Activated CD4-positive, alpha-beta T cell treated with anti-CD3 and anti-CD28 coated beads for 36 hours (primary cell): ENCODE measurements at regions of chr11 and their contacts with region 1.

Region 1: GRCh38 chr11:111446404-111447111 is 65.6 kb downstream of the BTG4 start:
- DNase-seq: peak; percentile 82
- ATAC-seq: peak; percentile 99
- H3K4me3 Mint-ChIP-seq: no peak overlapping the region
- H3K27ac Mint-ChIP-seq: peak overlapping the region; percentile 32
- H3K4me1 Mint-ChIP-seq: peaks cover 16% of the 10 kb centered on the region
- H3K27me3 Mint-ChIP-seq: no peaks in the 10 kb centered on the region

Region 2: GRCh38 chr11:110447897-110448745 is 998.4 kb before region 1 on chr11:
- CTCF ChIA-PET with region 1: no interaction called
- POLR2A ChIA-PET with region 1: no interaction called
- intact Hi-C with region 1: loop called (anchors 5 to 10 kb)
- DNase-seq: no peak
- ATAC-seq: no peak
- H3K4me3 Mint-ChIP-seq: no peak overlapping the region
- H3K27ac Mint-ChIP-seq: no peak overlapping the region
- H3K4me1 Mint-ChIP-seq: peaks cover 18% of the 10 kb centered on the region
- H3K27me3 Mint-ChIP-seq: no peaks in the 10 kb centered on the region

Region 3: GRCh38 chr11:110453684-110454354 is 992.7 kb before region 1 on chr11:
- CTCF ChIA-PET with region 1: interaction called, 3 read pairs
- POLR2A ChIA-PET with region 1: no interaction called
- intact Hi-C with region 1: loop called (anchors 5 to 10 kb)
- DNase-seq: no peak
- ATAC-seq: peak; percentile 58
- H3K4me3 Mint-ChIP-seq: no peak overlapping the region
- H3K27ac Mint-ChIP-seq: no peak overlapping the region
- H3K4me1 Mint-ChIP-seq: peaks cover 38% of the 10 kb centered on the region
- H3K27me3 Mint-ChIP-seq: no peaks in the 10 kb centered on the region

Region 4: GRCh38 chr11:111230122-111230465 is 216.5 kb before region 1 on chr11:
- CTCF ChIA-PET with region 1: interaction called, 11 read pairs
- POLR2A ChIA-PET with region 1: no interaction called
- intact Hi-C with region 1: no loop called
- DNase-seq: peak; percentile 10
- ATAC-seq: peak; percentile 73
- H3K4me3 Mint-ChIP-seq: no peak overlapping the region
- H3K27ac Mint-ChIP-seq: no peak overlapping the region
- H3K4me1 Mint-ChIP-seq: peaks cover 9% of the 10 kb centered on the region
- H3K27me3 Mint-ChIP-seq: peaks cover 17% of the 10 kb centered on the region

Region 5: GRCh38 chr11:111283945-111284481 is 162.5 kb before region 1 on chr11:
- CTCF ChIA-PET with region 1: interaction called, 38 read pairs
- POLR2A ChIA-PET with region 1: no interaction called
- intact Hi-C with region 1: loop called (anchors 1 kb)
- DNase-seq: no peak
- ATAC-seq: no peak
- H3K4me3 Mint-ChIP-seq: no peak overlapping the region
- H3K27ac Mint-ChIP-seq: no peak overlapping the region
- H3K4me1 Mint-ChIP-seq: peaks cover 3% of the 10 kb centered on the region
- H3K27me3 Mint-ChIP-seq: no peaks in the 10 kb centered on the region

Region 6: GRCh38 chr11:111429066-111429506 is 17.5 kb before region 1 on chr11:
- CTCF ChIA-PET with region 1: interaction called, 29 read pairs
- POLR2A ChIA-PET with region 1: no interaction called
- intact Hi-C with region 1: no loop called
- DNase-seq: peak; percentile 86
- ATAC-seq: peak; percentile 88
- H3K4me3 Mint-ChIP-seq: no peak overlapping the region
- H3K27ac Mint-ChIP-seq: no peak overlapping the region
- H3K4me1 Mint-ChIP-seq: no peaks in the 10 kb centered on the region
- H3K27me3 Mint-ChIP-seq: no peaks in the 10 kb centered on the region

Region 7: DNA sequence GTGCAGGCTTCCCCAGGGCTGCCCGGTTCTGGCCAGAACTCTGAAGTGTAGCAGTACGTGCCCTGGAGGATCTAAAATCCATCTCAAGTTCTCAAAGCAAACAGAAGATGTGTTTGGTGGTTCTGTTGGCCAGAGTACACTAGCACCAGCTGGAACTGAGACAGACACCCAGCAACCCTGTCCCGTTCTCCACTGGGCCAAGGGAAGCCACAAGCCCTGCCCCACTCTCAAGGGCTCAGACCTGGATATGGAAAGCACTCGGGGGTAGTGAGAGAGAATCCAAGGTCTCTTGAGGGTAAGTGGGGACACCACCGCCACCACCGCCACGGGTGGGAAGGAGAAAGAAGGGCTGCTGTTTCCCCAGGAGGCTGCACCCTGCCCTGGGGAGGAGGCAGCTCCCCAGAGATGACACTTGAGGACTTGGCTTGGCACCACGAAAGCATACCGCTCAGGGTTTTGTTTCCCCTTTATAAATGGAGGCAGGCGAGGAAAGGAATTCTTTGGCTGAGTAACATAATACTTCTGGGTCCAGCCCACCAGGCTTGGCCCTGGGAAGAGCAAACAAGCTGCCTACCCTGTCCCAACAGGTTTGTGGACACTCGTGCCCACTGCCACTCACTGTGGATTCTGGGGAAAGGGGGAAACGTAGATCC is 11.4 kb before region 1 on chr11:
- CTCF ChIA-PET with region 1: interaction called, 29 read pairs
- POLR2A ChIA-PET with region 1: no interaction called
- intact Hi-C with region 1: no loop called
- DNase-seq: no peak
- ATAC-seq: no peak
- H3K4me3 Mint-ChIP-seq: no peak overlapping the region
- H3K27ac Mint-ChIP-seq: no peak overlapping the region
- H3K4me1 Mint-ChIP-seq: peaks cover 6% of the 10 kb centered on the region
- H3K27me3 Mint-ChIP-seq: no peaks in the 10 kb centered on the region

Region 8: DNA sequence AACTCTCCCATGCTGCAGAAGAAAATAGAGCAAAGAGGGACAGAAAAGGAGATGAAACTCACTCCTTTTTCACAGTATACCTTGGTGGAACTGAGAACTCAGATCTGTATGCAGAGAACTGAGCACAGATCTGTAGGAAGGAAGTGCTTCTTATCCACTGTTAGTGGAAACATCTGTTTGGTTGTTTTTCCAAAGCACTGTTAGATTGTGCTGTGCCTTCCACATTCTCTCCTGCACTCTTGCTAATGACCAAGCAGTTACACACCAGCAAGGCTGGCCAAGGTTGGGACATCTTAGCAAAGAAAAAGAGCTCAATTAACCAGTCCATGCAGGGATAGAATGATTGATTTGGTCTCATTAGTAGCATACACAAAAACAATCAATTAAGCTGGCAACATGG is 135.6 kb after region 1 on chr11:
- CTCF ChIA-PET with region 1: no interaction called
- POLR2A ChIA-PET with region 1: no interaction called
- intact Hi-C with region 1: no loop called
- DNase-seq: no peak
- ATAC-seq: no peak
- H3K4me3 Mint-ChIP-seq: no peak overlapping the region
- H3K27ac Mint-ChIP-seq: no peak overlapping the region
- H3K4me1 Mint-ChIP-seq: no peaks in the 10 kb centered on the region
- H3K27me3 Mint-ChIP-seq: no peaks in the 10 kb centered on the region

Region 9: GRCh38 chr11:111735262-111736116 is 288.9 kb after region 1 on chr11:
- CTCF ChIA-PET with region 1: no interaction called
- POLR2A ChIA-PET with region 1: no interaction called
- intact Hi-C with region 1: no loop called
- DNase-seq: no peak
- ATAC-seq: no peak
- H3K4me3 Mint-ChIP-seq: no peak overlapping the region
- H3K27ac Mint-ChIP-seq: no peak overlapping the region
- H3K4me1 Mint-ChIP-seq: peaks cover 6% of the 10 kb centered on the region
- H3K27me3 Mint-ChIP-seq: no peaks in the 10 kb centered on the region